Activated T-helper 2 cell treated with anti-CD3 and anti-CD28 coated beads, Interferon-gamma antibody, Interleukin-2, Interleukin-4, amounts not matched to agents 10 μg/mL and 5 μg/mL and 100 μg/mL, durations not matched to agents 14 hours and 24 hours and 36 hours (primary cell): ENCODE measurements at regions of chr19 and their contacts with region 1.

Region 1: GRCh38 chr19:14571695-14572490 is at the start of gene NDUFB7:
- DNase-seq: peak; percentile 88
- H3K4me3 Mint-ChIP-seq: peak within 1 kb of the TSS; percentile 97
- H3K27ac Mint-ChIP-seq: peak within 1 kb of the TSS; percentile 76
- H3K4me1 Mint-ChIP-seq: peaks cover 21% of the 10 kb centered on the region
- H3K27me3 Mint-ChIP-seq: no peaks in the 10 kb centered on the region
- total RNA-seq, gene NDUFB7: 129 and 136 TPM in 2 replicates

Region 2: DNA sequence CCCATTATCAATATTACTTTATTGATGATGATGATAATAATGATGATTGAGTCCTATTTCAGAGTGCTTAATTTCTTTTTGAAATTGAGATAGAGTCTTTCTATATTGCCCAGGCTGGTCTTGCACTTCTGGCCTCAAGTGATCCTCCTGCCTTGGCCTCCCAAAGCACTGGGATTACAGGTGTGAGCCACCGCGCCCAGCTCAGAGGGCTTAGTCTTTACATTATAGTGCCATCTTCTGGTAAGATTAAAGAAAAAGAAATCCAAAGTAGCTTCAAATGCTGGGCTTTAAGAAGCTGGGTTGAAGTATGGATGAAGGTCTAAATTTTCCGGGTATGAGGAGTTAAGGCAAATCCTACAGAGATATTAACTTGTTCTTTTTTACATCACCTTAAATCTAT is 114.5 kb after region 1 on chr19:
- intact Hi-C with region 1: loop called (anchors 1 kb)
- DNase-seq: no peak
- H3K4me3 Mint-ChIP-seq: no peak overlapping the region
- H3K27ac Mint-ChIP-seq: no peak overlapping the region
- H3K4me1 Mint-ChIP-seq: peaks cover 11% of the 10 kb centered on the region
- H3K27me3 Mint-ChIP-seq: no peaks in the 10 kb centered on the region

Region 3: GRCh38 chr19:14889994-14890642 is 318.2 kb after region 1 on chr19:
- intact Hi-C with region 1: loop called (anchors 2 kb)
- DNase-seq: no peak
- H3K4me3 Mint-ChIP-seq: no peak overlapping the region
- H3K27ac Mint-ChIP-seq: no peak overlapping the region
- H3K4me1 Mint-ChIP-seq: peaks cover 5% of the 10 kb centered on the region
- H3K27me3 Mint-ChIP-seq: peaks cover 7% of the 10 kb centered on the region